HepG2 (cell line): ENCODE measurements at regions of chr3 and their contacts with region 1.

Region 1: DNA sequence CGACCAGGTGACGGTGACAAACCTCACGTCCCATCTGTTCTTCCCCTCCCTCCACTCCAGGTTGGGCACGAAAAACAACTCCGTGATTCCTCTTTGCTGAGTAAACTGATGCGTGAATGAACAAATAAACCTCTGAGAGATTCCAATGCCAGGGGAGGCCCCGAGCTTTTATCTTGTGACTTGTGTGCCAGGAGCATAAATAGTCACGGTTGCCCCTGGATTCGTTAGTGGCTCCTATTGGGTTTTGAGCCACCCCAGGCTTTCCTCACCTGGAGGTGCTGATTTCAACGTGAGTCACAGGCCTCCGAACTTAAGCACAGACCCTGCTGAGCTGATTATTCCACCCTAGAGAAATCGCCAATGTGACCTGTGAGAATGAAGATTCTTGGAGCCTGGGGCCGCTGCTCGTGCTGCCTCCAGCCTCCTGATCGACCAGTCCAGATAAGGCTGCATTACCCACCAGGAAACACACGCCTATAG is 119.2 kb downstream of the SHQ1 start:
- DNase-seq: peak; percentile 52
- ATAC-seq: peak; percentile 62
- H3K4me3 ChIP-seq: peak overlapping the region in 1 of 3 experiments; percentile 38; a peak in 1 of 6 replicates
- H3K27ac ChIP-seq: peak overlapping the region; percentile 6
- H3K4me1 ChIP-seq: peaks cover 21% of the 10 kb centered on the region
- H3K27me3 ChIP-seq: no peaks in the 10 kb centered on the region
- CTCF ChIP-seq: no peak
- EP300 ChIP-seq: no peak
- POLR2A ChIP-seq: no peak
- RAD21 ChIP-seq: no peak

Region 2: GRCh38 chr3:72665701-72666443 is 63.2 kb before region 1 on chr3:
- CTCF ChIA-PET with region 1: no interaction called
- POLR2A ChIA-PET with region 1: no interaction called
- in situ Hi-C with region 1: no loop called
- intact Hi-C with region 1: no loop called
- DNase-seq: no peak
- ATAC-seq: peak; percentile 81
- H3K4me3 ChIP-seq: no peak overlapping the region
- H3K27ac ChIP-seq: no peak overlapping the region
- H3K4me1 ChIP-seq: peaks cover 18% of the 10 kb centered on the region
- H3K27me3 ChIP-seq: no peaks in the 10 kb centered on the region
- CTCF ChIP-seq: peak; percentile 53
- EP300 ChIP-seq: no peak
- POLR2A ChIP-seq: no peak
- RAD21 ChIP-seq: peak; percentile 54

Region 3: GRCh38 chr3:72768936-72769335 is 39.9 kb after region 1 on chr3:
- CTCF ChIA-PET with region 1: no interaction called
- POLR2A ChIA-PET with region 1: no interaction called
- in situ Hi-C with region 1: no loop called
- intact Hi-C with region 1: loop called (anchors 2 kb)
- DNase-seq: no peak
- ATAC-seq: no peak
- H3K4me3 ChIP-seq: no peak overlapping the region
- H3K27ac ChIP-seq: no peak overlapping the region
- H3K4me1 ChIP-seq: no peaks in the 10 kb centered on the region
- H3K27me3 ChIP-seq: no peaks in the 10 kb centered on the region
- CTCF ChIP-seq: no peak
- EP300 ChIP-seq: no peak
- POLR2A ChIP-seq: no peak
- RAD21 ChIP-seq: no peak